Ascending aorta (tissue), 2 donors: ENCODE measurements at regions of chr13 and their contacts with region 1.

Region 1: GRCh38 chr13:49840266-49840665 is 47.8 kb upstream of the KPNA3 start:
- DNase-seq: no peak
- H3K4me3 ChIP-seq: no peak overlapping the region
- H3K27ac ChIP-seq: no peak overlapping the region
- H3K4me1 ChIP-seq: no peaks in the 10 kb centered on the region
- H3K27me3 ChIP-seq: no peaks in the 10 kb centered on the region
- CTCF ChIP-seq: no peak

Region 2: DNA sequence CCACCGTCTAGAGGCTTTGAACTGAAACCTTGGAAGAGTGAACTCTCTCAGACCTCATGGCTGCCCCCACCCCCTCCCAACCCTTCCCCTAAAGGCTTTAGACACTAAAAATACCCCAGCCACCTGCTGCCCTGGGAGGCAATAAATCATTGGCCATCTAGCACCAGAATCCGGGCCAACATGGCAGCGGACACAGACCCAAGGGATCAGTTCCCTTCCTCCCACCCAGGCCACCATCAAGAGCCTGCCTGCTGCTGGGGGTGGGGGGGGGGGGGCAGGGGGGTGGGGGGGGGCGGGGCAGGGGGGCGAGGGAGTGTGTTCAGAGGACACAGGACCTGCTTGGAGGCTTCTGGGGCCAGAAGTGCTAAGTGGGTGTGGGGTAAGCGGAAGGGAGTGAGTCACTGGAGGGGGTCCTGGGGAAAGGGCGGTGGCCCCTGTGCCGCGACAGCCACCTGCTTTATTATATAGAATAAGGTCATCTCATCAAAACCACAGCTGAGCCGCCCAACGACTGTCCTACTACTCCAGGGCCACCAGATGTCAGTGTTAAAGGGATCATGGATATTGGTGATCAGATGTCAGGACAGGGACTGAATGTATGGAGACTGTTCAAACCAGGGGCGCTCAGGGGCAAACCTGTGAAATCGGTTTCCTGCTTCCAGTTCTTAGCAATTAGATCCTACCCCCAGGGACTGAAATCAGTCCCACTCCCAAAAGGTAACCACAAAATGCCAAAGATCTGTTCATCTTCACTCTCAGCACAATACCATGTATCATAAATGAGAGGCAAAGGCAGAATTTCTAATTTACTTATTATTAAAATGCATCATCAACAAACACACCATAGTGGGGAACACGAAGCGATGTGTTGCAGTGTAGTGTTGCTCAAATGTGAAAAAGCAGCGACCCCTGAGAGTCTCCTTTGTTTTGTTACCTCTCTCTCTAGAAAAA is 187.6 kb before region 1 on chr13:
- intact Hi-C with region 1: loop called (anchors 5 kb)
- DNase-seq: no peak
- H3K4me3 ChIP-seq: no peak overlapping the region
- H3K27ac ChIP-seq: no peak overlapping the region
- H3K4me1 ChIP-seq: no peaks in the 10 kb centered on the region
- H3K27me3 ChIP-seq: no peaks in the 10 kb centered on the region
- CTCF ChIP-seq: peak in 2 of 3 experiments; percentile 14 to 30

Region 3: DNA sequence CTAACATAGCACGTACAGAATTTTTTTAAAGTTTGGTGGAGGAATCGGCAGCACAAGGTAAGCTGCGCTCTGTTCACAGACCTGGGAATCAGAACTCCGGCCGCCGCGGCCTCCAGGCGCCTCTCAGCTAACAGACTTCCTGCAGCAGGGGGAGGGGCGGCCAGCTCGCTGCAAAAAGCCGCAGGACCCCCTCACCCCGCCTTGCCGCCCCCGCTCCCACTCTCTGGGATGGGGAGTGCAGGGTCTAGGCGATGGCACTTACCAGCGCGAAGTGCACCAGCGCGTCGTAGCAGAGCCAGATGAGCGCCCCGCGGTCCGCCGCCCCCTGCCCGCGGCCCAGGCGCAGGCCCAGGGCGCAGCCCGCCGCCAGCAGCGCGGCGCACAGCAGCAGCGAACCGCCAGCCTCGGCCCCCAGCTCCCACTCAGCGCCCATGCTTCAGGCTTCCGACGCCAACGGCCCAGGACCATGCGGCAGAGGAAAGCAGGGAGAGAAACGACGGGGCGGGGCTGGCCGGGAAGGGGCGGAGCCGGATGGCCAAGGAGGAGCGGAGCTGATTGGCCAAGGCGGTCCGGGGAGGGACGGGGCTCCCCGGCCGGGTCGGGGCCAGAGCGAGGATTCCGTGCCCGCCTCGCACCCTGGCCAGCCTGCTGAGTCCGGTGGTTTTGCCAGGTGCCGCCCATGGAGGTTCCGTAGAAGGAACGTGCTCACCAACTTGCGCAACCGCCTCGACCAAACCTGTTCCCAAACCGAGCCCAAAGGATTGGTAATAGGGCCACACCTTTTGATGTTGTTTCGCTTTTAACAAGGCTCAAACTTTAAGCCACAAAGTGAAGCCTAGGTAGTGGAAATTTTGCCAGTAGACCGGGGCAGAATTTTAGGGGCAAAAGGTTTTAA is 149.0 kb before region 1 on chr13 and contains the start of gene EBPL:
- intact Hi-C with region 1: no loop called
- DNase-seq: peak; percentile 72 to 95
- H3K4me3 ChIP-seq: peak within 1 kb of the TSS; percentile 84 to 93
- H3K27ac ChIP-seq: peak within 1 kb of the TSS; percentile 66 to 88
- H3K4me1 ChIP-seq: peaks cover 0 to 3% of the 10 kb centered on the region in 2 donors
- H3K27me3 ChIP-seq: no peaks in the 10 kb centered on the region
- CTCF ChIP-seq: no peak
- total RNA-seq, gene EBPL: 18.3 TPM